Common myeloid progenitor, CD34-positive (primary cell): ENCODE measurements at regions of chr20 and their contacts with region 1.

Region 1: DNA sequence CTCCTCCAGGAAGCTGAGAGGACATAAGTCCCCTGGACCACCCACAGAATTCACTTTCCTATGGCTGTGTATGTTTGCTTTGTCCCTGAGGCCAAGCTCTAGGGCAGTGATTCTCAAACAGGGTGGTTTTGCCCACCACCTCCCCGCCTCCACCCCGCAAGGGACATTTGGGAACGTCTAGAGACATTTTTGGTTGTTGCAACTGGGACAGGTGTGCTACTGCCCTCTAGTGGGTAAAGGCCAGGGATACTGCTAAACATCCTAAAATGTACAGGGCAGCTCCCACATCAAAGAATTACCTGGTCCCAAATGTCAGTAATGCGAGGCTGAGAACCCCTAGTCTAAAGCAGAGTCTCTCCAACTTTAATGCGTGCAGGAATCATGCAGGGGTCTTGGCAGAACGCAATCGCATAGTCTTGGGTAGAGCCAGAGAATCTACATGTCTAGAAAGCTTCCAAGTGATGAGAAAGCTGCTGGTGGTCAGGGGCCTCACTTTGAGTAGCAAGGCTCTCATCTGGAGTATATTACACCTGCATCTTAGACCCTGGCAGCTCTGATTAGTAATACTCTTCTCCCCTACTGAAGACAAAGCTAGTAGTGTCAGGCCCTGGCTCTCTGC is 5.1 kb downstream of the KCNS1 start:
- DNase-seq: peak; percentile 63 to 79 (median 73)
- H3K4me3 ChIP-seq: no peak overlapping the region
- H3K27ac ChIP-seq: no peak overlapping the region
- H3K4me1 ChIP-seq: peaks cover 0 to 19% (median 10%) of the 10 kb centered on the region in 4 experiments
- H3K27me3 ChIP-seq: peaks cover 14 to 50% (median 40%) of the 10 kb centered on the region in 5 experiments

Region 2: GRCh38 chr20:45011108-45011526 is 84.7 kb before region 1 on chr20:
- CTCF ChIA-PET with region 1: interaction called, 32 read pairs
- POLR2A ChIA-PET with region 1: no interaction called
- DNase-seq: peak; percentile 51 to 70 (median 68)
- H3K4me3 ChIP-seq: no peak overlapping the region
- H3K27ac ChIP-seq: no peak overlapping the region
- H3K4me1 ChIP-seq: no peaks in the 10 kb centered on the region
- H3K27me3 ChIP-seq: no peaks in the 10 kb centered on the region

Region 3: GRCh38 chr20:45067558-45067957 is 28.3 kb before region 1 on chr20:
- CTCF ChIA-PET with region 1: interaction called, 15 read pairs
- POLR2A ChIA-PET with region 1: no interaction called
- DNase-seq: no peak
- H3K4me3 ChIP-seq: no peak overlapping the region
- H3K27ac ChIP-seq: no peak overlapping the region
- H3K4me1 ChIP-seq: no peaks in the 10 kb centered on the region
- H3K27me3 ChIP-seq: no peaks in the 10 kb centered on the region

Region 4: GRCh38 chr20:45083127-45083526 is 12.7 kb before region 1 on chr20:
- CTCF ChIA-PET with region 1: interaction called, 32 read pairs
- POLR2A ChIA-PET with region 1: no interaction called
- DNase-seq: no peak
- H3K4me3 ChIP-seq: no peak overlapping the region
- H3K27ac ChIP-seq: no peak overlapping the region
- H3K4me1 ChIP-seq: peaks cover 0 to 3% (median 1%) of the 10 kb centered on the region in 4 experiments
- H3K27me3 ChIP-seq: no peaks in the 10 kb centered on the region

Region 5: GRCh38 chr20:45157962-45158361 is 62.1 kb after region 1 on chr20:
- CTCF ChIA-PET with region 1: no interaction called
- POLR2A ChIA-PET with region 1: no interaction called
- DNase-seq: no peak
- H3K4me3 ChIP-seq: no peak overlapping the region
- H3K27ac ChIP-seq: no peak overlapping the region
- H3K4me1 ChIP-seq: no peaks in the 10 kb centered on the region
- H3K27me3 ChIP-seq: peaks cover 0 to 2% (median 0%) of the 10 kb centered on the region in 5 experiments

Region 6: GRCh38 chr20:45293041-45294002 is 197.5 kb after region 1 on chr20:
- CTCF ChIA-PET with region 1: interaction called, 60 read pairs
- POLR2A ChIA-PET with region 1: no interaction called
- DNase-seq: peak; percentile 70 to 86 (median 84)
- H3K4me3 ChIP-seq: peak overlapping the region; percentile 13 to 75 (median 60)
- H3K27ac ChIP-seq: no peak overlapping the region
- H3K4me1 ChIP-seq: peaks cover 0 to 9% (median 8%) of the 10 kb centered on the region in 4 experiments
- H3K27me3 ChIP-seq: peaks cover 3 to 39% (median 16%) of the 10 kb centered on the region in 5 experiments